Caco-2 (cell line): ENCODE measurements at regions of chr11 and their contacts with region 1.

Region 1: DNA sequence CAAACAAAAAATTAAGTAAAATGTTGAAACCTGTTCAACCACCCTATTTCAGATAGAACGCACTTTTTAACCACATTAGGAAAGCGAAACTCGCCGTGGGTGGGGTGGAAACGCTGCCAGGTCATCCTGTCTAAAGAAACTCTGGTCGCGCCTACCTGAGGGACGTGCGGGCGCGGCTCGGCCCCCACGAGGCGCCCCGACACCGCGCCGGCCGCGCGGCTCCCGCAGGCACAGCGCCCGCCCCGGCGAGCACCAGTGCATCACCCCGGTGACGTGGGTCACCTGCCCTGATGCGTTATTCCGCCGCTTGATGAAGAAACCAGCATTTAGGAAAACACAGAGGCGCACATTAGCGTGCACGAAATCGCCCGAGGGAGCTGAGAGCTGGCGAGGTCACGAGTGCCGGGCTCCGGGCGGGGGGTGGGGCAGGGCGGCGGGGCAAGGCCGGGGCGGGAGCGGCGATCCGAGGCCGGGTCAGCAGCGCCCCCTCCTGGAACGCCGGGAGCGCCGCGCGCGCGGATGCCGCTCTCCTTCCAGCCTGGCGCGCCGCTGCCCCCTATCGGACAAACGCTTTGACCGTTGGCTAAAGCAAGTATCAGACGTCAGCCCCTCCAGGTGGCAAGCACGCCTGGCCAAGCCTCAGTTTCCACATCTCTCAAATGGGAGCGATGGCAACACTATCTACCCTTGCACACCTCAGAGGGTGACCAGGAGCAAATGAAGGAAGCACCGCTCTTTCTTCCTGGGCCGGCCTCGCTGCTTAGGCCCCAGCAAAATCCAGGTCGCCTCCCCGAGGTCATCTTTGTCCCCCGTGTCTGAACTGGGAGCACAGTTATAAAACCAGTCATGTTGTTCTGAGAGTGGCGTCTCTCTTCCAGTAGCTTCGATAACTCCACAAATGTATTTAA is 15.7 kb upstream of the SNX32 start:
- DNase-seq: peak; percentile 91 to 97
- H3K4me3 ChIP-seq: peak overlapping the region; percentile 43
- H3K4me3 Mint-ChIP-seq: peak overlapping the region; percentile 83
- H3K27ac Mint-ChIP-seq: peak overlapping the region; percentile 85
- H3K4me1 ChIP-seq: peaks cover 34% of the 10 kb centered on the region
- H3K4me1 Mint-ChIP-seq: peaks cover 33% of the 10 kb centered on the region
- H3K27me3 ChIP-seq: no peaks in the 10 kb centered on the region
- H3K27me3 Mint-ChIP-seq: no peaks in the 10 kb centered on the region
- CTCF ChIP-seq: peak; percentile 97 to 100

Region 2: DNA sequence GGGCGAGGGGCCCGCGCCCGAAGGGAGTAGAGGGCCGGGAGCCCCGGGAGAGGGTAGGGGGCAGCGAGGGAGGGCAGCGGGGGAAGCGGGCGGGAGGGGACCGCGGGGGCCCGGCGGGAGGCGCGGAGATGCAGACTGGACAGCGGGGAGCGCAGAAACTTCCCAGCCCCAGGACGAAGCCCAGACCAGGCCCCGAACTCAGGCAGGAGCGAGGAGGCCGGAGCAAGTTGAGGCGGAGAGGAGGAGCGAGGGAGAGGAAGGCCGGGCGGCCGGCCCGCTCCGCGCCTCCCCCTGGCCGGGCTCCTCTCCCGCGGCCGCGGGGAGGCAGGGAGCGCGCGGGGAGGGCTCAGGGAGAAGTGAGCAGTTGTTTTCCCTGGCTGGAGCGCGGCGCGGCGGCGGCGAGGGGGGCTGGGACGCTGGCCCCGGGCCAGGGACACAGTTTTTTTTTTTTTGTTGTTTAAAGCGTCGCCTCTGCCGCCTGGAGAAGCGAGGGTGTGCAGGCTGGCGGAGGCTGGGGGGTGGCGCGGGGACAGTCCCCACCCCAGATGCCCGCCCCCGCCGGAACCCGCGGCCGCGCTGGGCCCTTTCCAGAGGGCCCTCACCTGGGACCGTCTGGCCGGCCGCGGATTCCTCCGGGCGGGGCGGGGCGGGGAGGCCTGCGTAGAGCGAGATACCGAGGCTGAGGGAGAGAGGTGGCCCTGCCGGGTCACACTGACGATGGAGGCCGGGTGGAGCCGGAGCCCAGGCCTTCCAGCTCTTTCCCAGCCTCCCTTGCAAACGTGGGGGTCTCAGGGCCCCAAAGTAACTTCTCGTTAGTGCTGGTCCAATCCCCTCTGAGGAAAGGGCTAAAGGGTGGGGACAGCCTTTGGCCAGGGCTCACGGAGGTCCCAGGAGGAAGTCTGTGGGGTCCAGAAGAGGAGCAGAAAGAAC is 259.8 kb before region 1 on chr11 and contains the start of gene LTBP3:
- CTCF ChIA-PET with region 1: no interaction called
- POLR2A ChIA-PET with region 1: no interaction called
- intact Hi-C with region 1: no loop called
- DNase-seq: peak; percentile 82 to 85
- H3K4me3 ChIP-seq: peak within 1 kb of the TSS; percentile 70
- H3K4me3 Mint-ChIP-seq: peak within 1 kb of the TSS; percentile 75
- H3K27ac Mint-ChIP-seq: peak within 1 kb of the TSS; percentile 61
- H3K4me1 ChIP-seq: peaks cover 57% of the 10 kb centered on the region
- H3K4me1 Mint-ChIP-seq: peaks cover 41% of the 10 kb centered on the region
- H3K27me3 ChIP-seq: no peaks in the 10 kb centered on the region
- H3K27me3 Mint-ChIP-seq: no peaks in the 10 kb centered on the region
- CTCF ChIP-seq: no peak
- total RNA-seq, gene LTBP3: 87.2 and 91.2 TPM in 2 replicates

Region 3: GRCh38 chr11:65711785-65712632 is 106.1 kb before region 1 on chr11 and contains the start of gene KAT5:
- CTCF ChIA-PET with region 1: interaction called, 41 read pairs
- POLR2A ChIA-PET with region 1: interaction called, 27 read pairs
- intact Hi-C with region 1: loop called (anchors 1 kb)
- DNase-seq: peak; percentile 98 to 99
- H3K4me3 ChIP-seq: peak within 1 kb of the TSS; percentile 66
- H3K4me3 Mint-ChIP-seq: peak within 1 kb of the TSS; percentile 83
- H3K27ac Mint-ChIP-seq: peak within 1 kb of the TSS; percentile 98
- H3K4me1 ChIP-seq: peaks cover 21% of the 10 kb centered on the region
- H3K4me1 Mint-ChIP-seq: peaks cover 13% of the 10 kb centered on the region
- H3K27me3 ChIP-seq: no peaks in the 10 kb centered on the region
- H3K27me3 Mint-ChIP-seq: no peaks in the 10 kb centered on the region
- CTCF ChIP-seq: peak; percentile 97 to 98
- total RNA-seq, gene KAT5: 60.2 and 70.1 TPM in 2 replicates

Region 4: GRCh38 chr11:65720237-65720934 is 97.7 kb before region 1 on chr11 and contains the start of gene RNASEH2C:
- CTCF ChIA-PET with region 1: interaction called, 12 read pairs
- POLR2A ChIA-PET with region 1: interaction called, 11 read pairs
- intact Hi-C with region 1: no loop called
- DNase-seq: peak; percentile 83 to 87
- H3K4me3 ChIP-seq: peak within 1 kb of the TSS; percentile 98
- H3K4me3 Mint-ChIP-seq: peak within 1 kb of the TSS; percentile 86
- H3K27ac Mint-ChIP-seq: peak within 1 kb of the TSS; percentile 68
- H3K4me1 ChIP-seq: no peaks in the 10 kb centered on the region; the same call in 1 of the 2 replicates
- H3K4me1 Mint-ChIP-seq: peaks cover 10% of the 10 kb centered on the region
- H3K27me3 ChIP-seq: no peaks in the 10 kb centered on the region
- H3K27me3 Mint-ChIP-seq: peaks cover 5% of the 10 kb centered on the region
- CTCF ChIP-seq: no peak
- total RNA-seq, gene RNASEH2C: 66.7 and 76.4 TPM in 2 replicates

Region 5: GRCh38 chr11:65743928-65744698 is 74.0 kb before region 1 on chr11:
- CTCF ChIA-PET with region 1: interaction called, 17 read pairs
- POLR2A ChIA-PET with region 1: no interaction called
- intact Hi-C with region 1: loop called (anchors 1 kb)
- DNase-seq: peak; percentile 70 to 76
- H3K4me3 ChIP-seq: no peak overlapping the region
- H3K4me3 Mint-ChIP-seq: no peak overlapping the region
- H3K27ac Mint-ChIP-seq: no peak overlapping the region
- H3K4me1 ChIP-seq: no peaks in the 10 kb centered on the region
- H3K4me1 Mint-ChIP-seq: no peaks in the 10 kb centered on the region
- H3K27me3 ChIP-seq: no peaks in the 10 kb centered on the region; the same call in none of the 2 replicates
- H3K27me3 Mint-ChIP-seq: peaks cover 4% of the 10 kb centered on the region
- CTCF ChIP-seq: peak; percentile 47 to 66

Region 6: GRCh38 chr11:65779851-65780577 is 38.1 kb before region 1 on chr11:
- CTCF ChIA-PET with region 1: interaction called, 23 read pairs
- POLR2A ChIA-PET with region 1: interaction called, 9 read pairs
- intact Hi-C with region 1: loop called (anchors 2 kb)
- DNase-seq: peak; percentile 66 to 82
- H3K4me3 ChIP-seq: peak overlapping the region; percentile 56
- H3K4me3 Mint-ChIP-seq: peak overlapping the region; percentile 91
- H3K27ac Mint-ChIP-seq: peak overlapping the region; percentile 75
- H3K4me1 ChIP-seq: peaks cover 16% of the 10 kb centered on the region
- H3K4me1 Mint-ChIP-seq: peaks cover 8% of the 10 kb centered on the region
- H3K27me3 ChIP-seq: no peaks in the 10 kb centered on the region
- H3K27me3 Mint-ChIP-seq: no peaks in the 10 kb centered on the region
- CTCF ChIP-seq: peak; percentile 54 to 71

Region 7: DNA sequence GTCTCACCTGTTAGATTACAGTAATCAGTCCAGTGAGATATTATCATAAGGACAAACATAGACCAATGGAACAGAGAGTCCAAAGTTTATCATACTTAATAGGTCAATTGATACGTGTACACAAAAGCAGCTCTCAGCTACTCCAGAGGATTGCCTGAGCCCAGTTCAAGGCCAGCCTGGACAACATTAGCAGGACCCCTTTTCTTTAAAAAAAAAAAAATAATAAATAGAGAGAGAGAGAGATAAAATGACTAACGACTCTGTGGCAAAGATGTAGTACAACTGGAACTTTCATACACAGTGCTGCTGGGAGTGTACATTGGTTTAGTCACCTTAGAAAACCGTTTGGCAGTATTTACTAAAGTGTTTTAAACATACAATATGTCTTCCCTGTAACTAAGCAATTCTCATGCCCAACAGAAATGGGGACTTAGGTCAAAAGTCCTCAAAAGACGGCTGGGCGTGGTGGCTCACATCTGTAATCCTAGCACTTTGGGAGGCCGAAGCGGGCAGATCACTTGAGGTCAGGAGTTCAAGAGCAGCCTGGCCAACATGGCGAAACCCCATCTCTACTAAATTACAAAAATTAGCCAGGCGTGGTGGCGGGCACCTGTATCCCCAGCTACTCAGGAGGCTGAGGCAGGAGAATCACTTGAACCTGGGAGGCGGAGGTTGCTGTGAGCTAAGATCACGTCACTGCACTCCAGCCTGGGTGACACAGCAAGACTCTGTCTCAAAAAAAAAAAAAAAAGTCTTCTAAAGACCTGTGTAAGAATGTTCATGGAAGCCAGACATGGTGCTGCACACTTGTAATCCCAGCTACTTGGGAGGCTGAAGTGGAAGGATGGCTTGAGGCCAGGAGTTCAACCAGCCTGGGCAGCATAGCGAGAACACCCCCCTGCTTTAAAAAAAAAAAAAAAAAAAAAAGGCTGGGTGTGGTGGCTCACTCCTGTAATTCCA is 26.4 kb after region 1 on chr11:
- CTCF ChIA-PET with region 1: no interaction called
- POLR2A ChIA-PET with region 1: interaction called, 10 read pairs
- intact Hi-C with region 1: no loop called
- DNase-seq: no peak
- H3K4me3 ChIP-seq: no peak overlapping the region
- H3K4me3 Mint-ChIP-seq: no peak overlapping the region
- H3K27ac Mint-ChIP-seq: peak overlapping the region; percentile 45
- H3K4me1 ChIP-seq: peaks cover 26% of the 10 kb centered on the region
- H3K4me1 Mint-ChIP-seq: peaks cover 16% of the 10 kb centered on the region
- H3K27me3 ChIP-seq: no peaks in the 10 kb centered on the region
- H3K27me3 Mint-ChIP-seq: no peaks in the 10 kb centered on the region
- CTCF ChIP-seq: no peak

Region 8: DNA sequence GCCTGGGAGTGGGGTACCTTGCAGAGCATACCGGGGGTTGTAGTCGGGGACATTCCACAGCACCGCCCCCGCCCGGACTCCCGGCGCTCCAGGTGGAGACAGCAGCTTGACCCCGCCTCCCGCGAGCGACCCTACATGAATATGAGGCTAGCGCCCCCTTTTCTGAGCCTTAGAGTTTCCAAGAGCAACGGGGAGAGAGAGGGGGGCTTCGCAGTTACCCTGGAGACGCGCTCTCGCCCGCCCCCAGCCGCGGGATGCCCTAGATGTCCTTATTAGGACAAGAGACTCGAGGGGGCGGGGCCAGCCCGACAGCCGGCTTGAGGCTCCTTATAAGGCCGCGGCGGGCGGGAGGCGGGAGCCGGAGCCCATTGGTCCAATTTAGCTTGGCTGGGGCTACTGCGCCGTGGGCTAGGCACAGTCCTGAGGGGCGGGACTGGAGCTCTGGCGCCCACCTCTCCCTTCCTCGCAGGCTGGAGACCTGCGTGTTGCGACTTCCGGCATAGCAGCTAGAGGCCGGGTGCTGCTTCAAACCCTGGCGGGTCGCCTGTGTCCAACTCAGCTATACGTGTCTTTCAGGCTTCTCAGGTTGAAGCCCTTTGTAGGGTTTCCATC is 41.2 kb after region 1 on chr11:
- CTCF ChIA-PET with region 1: interaction called, 11 read pairs
- POLR2A ChIA-PET with region 1: interaction called, 6 read pairs
- intact Hi-C with region 1: loop called (anchors 2 kb)
- DNase-seq: peak; percentile 98 to 99
- H3K4me3 ChIP-seq: peak overlapping the region; percentile 87
- H3K4me3 Mint-ChIP-seq: peak overlapping the region; percentile 97
- H3K27ac Mint-ChIP-seq: peak overlapping the region; percentile 95
- H3K4me1 ChIP-seq: peaks cover 15% of the 10 kb centered on the region
- H3K4me1 Mint-ChIP-seq: peaks cover 30% of the 10 kb centered on the region
- H3K27me3 ChIP-seq: no peaks in the 10 kb centered on the region
- H3K27me3 Mint-ChIP-seq: no peaks in the 10 kb centered on the region
- CTCF ChIP-seq: peak in 1 of 2 experiments; percentile 31